Right lobe of liver (tissue), 6 donors: ENCODE measurements at regions of chr9 and their contacts with region 1.

Region 1: DNA sequence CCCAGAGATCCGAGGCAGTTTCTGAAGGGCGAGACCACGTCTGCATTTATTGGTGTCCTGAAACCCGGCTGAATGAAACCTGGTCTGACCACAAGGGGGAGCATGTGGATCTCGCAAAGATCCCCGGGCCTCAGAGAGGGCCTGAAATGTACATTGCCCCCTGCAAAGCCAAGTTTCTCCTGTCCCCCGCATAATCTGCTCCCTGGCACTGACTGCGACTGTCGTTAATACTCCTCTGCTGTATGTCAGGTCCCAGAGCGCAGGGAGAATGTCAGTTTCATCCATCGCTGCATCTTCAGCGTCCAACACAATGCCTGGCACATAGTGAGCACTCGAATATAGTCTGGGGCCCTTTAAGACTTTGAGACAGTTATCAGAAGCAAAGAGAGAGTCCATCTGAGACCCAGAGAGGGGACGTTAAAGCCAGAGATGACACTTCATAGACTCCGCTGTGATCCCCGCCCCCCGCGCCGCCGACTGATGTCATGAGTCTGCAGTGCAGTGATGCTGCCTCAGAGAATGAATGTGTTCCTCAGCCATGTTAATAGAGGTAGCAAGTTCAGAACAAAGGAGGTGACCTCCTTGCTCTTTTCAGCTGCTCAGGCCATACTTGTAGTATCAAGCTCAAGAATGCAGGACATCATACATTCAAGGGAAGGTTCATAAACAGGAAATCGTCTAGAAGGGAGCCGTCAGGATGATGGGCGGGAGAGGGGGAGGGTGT is 74.5 kb upstream of the BARHL1 start:
- DNase-seq: peak in 2 of 3 donors; percentile 51 to 66
- ATAC-seq: peak; percentile 76 to 89 (median 80)
- H3K4me3 ChIP-seq: no peak overlapping the region
- H3K27ac ChIP-seq: no peak overlapping the region
- H3K4me1 ChIP-seq: no peaks in the 10 kb centered on the region
- H3K27me3 ChIP-seq: no peaks in the 10 kb centered on the region
- CTCF ChIP-seq: peak; percentile 67 to 76 (median 76)
- POLR2A ChIP-seq: no peak

Region 2: DNA sequence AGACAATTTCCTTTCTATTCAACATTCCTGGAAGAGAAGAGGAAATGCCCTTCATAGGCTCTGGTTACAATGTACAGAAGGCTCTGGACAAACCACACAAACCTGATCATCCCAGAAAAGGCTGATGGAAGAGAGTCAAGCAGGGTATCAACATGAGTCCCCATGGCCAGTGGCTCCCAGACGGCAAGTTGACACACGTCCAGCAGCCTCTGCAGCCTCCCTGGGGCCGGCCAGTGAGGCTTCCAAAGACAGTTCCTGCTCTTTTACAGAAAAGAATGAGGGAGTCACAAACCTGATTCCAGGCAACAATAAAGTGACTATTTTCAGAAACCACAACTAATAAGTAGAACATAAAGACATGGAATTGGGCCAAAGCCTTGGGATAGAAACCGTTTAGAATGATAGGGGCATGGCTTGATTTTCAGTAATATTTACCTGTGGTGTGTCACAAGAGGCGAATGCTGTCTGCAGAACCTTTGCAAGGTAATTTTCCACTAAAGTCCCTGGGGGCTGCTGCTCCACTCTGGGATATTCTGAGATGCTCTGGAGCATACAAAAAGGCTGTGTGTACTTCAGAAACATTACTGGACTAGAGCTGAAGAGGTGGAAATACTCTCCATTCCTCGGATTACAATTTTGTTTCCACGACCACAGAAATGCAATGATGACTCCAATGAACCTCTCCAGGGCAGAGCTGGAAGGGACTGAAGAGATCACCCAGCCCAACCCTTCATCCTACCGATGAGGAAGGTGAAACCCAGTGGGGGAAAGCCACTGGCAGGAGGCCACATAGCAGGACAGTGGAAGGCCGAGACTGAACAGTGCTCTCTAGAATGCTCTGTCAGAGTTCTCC is 438.6 kb before region 1 on chr9:
- intact Hi-C with region 1: no loop called
- DNase-seq: no peak
- ATAC-seq: no peak
- H3K4me3 ChIP-seq: no peak overlapping the region
- H3K27ac ChIP-seq: no peak overlapping the region
- H3K4me1 ChIP-seq: no peaks in the 10 kb centered on the region
- H3K27me3 ChIP-seq: no peaks in the 10 kb centered on the region
- CTCF ChIP-seq: no peak
- POLR2A ChIP-seq: no peak

Region 3: GRCh38 chr9:132575005-132575609 is 67.2 kb after region 1 on chr9:
- intact Hi-C with region 1: loop called (anchors 5 kb)
- DNase-seq: peak; percentile 62 to 80 (median 79)
- ATAC-seq: peak; percentile 85 to 96 (median 89)
- H3K4me3 ChIP-seq: no peak overlapping the region
- H3K27ac ChIP-seq: no peak overlapping the region
- H3K4me1 ChIP-seq: no peaks in the 10 kb centered on the region
- H3K27me3 ChIP-seq: peaks cover 0 to 19% of the 10 kb centered on the region in 2 donors
- CTCF ChIP-seq: peak; percentile 60 to 70 (median 68)
- POLR2A ChIP-seq: no peak

Region 4: GRCh38 chr9:132800038-132800648 is 292.2 kb after region 1 on chr9:
- intact Hi-C with region 1: loop called in 1 of 2 experiments (anchors 5 kb)
- DNase-seq: peak; percentile 69 to 73 (median 72)
- ATAC-seq: peak; percentile 90 to 98 (median 94)
- H3K4me3 ChIP-seq: no peak overlapping the region
- H3K27ac ChIP-seq: no peak overlapping the region
- H3K4me1 ChIP-seq: no peaks in the 10 kb centered on the region
- H3K27me3 ChIP-seq: no peaks in the 10 kb centered on the region
- CTCF ChIP-seq: peak; percentile 82 to 92 (median 89)
- POLR2A ChIP-seq: no peak